AG04449 (cell line): ENCODE measurements at regions of chr9 and their contacts with region 1.

Region 1: GRCh38 chr9:21395778-21396717 is 10.8 kb upstream of the IFNA2 start:
- DNase-seq: no peak
- H3K4me3 ChIP-seq: peak overlapping the region; percentile 58
- CTCF ChIP-seq: peak; percentile 75

Region 2: DNA sequence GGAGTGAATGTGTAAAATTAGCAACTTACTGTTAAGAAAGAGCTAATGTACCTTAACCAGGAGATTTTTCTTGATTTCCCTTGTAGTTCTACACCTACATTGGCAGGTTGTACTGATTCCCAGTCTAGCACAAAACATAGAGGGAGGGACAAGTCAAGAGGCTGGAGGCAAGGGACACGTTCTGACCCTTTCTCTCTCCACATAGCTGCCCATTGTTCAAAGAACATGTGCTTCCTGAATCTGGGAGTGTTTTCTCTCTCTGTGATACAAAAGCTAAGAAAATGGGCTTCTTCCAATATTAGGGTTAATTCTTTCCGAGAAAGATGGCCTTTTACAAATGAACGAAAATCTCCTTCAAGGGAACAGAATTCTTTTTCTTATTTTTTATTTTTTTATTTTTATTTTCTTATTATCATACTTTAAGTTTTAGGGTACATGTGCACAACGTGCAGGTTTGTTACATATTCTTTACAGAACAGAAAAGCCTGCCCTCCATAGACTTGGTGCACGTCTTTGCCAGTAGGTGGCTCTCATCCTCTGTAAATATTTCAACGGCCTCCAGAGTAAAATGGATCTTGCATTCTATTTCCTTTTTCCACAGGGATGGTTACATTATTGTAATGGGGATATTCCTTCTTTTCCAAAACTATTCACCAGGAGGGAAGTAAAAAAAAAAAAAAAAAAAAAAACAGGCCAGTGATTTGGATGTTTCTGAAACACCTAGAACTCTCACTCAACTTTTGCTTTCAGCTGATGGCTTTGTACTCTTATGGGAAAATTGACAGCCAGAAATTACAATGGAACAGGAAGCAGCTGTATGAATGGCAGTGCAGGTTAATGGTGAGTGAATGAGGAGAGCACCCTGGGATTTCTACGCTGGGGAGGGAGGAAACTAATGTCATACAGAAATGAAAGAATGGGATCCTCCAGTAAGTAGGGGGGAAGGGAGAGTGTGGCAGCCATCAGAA is 77.8 kb before region 1 on chr9:
- CTCF ChIA-PET with region 1: interaction called, 13 read pairs
- POLR2A ChIA-PET with region 1: no interaction called
- DNase-seq: no peak
- H3K4me3 ChIP-seq: no peak overlapping the region
- CTCF ChIP-seq: peak; percentile 71

Region 3: GRCh38 chr9:21326526-21327139 is 69.4 kb before region 1 on chr9:
- CTCF ChIA-PET with region 1: interaction called, 17 read pairs
- POLR2A ChIA-PET with region 1: no interaction called
- DNase-seq: no peak
- H3K4me3 ChIP-seq: no peak overlapping the region
- CTCF ChIP-seq: peak; percentile 34

Region 4: DNA sequence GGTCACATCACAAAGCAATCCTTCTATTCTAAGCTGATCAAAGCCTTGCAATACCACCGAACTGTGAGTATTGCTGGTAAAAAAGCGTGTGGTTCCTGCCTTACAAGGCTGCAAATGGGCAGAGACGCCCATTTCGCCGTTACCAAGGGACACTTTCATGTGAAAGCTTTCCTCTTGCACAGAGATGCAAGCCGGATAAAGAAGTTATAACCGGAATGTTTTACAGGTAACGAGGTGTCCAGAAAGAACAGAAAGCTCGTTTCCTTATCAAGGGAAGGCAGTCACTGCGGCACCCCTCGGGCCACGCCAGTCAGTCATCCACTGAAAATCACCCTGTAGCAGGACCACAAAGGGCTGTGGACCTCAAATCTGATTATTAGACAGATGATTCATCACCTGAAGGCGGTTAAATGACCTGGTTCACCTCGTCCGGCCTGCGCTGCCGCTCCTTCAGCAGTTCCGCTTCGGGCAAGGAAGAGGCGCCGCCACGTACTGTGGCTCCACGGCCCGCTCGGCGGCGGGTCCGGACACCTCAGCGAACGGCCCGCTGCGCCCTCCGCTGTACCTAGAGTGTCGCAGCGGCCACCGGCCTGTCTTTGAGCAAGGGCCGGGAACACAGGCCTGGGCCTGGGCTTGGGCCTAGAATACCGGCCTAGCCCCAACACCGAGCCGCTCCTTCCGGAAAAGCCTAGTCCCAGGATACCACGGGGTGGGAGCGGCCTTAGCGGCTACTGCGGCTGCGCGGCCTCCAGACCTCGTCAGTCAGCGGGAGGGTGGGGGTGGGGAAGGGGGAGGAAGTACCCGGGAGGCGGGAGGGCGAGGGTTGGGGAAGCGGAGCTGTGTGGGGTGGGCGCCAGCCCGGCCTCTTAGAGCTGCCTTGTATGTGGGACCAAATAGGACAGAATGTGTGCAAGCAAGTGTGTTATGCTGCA is 61.1 kb before region 1 on chr9 and contains the start of gene KLHL9:
- CTCF ChIA-PET with region 1: interaction called, 17 read pairs
- POLR2A ChIA-PET with region 1: interaction called, 4 read pairs
- DNase-seq: peak; percentile 52
- H3K4me3 ChIP-seq: peak within 1 kb of the TSS; percentile 81
- CTCF ChIP-seq: no peak

Region 5: DNA sequence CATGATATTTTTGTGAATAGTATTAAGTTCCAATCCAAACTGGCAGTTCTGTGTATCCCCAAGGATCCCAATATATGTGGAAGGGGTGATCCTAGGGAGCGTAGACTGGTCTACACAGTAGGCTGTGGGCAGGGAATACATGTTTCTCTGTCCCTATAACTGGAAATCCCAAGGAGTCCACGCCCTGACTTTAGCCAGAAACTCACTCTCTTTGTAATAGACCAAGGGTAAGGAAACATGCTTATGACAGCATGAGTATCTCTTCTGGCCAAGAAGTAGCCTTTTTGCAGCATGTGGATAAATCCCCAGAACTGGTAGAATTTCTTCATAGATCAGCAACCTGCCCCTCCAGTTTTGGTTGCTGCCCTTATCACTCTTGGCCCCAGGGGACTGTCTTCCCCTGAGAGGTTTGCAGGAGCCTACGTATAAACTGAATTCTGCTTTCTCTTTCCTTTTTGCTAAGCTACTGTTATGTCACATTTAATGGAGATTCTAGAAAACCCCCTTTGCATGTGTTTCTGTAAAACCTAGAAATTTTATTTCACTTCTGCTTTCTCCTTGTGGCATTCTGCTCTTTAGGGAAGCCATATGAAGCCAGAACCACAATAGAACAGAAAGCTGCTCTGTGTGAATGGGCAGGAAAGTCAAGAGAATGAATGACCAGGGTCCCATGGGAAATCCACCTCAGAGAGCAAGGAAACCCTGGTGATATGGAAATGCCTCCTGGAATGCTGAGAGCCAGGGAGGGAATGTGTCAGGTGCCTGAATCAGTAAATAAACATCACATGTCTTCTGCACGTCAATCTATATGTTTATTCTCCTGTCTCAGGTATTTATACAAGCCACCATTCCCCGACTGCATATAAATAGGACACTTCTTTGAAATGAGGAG is 14.4 kb before region 1 on chr9:
- CTCF ChIA-PET with region 1: interaction called, 13 read pairs
- POLR2A ChIA-PET with region 1: no interaction called
- DNase-seq: no peak
- H3K4me3 ChIP-seq: no peak overlapping the region
- CTCF ChIP-seq: no peak

Region 6: DNA sequence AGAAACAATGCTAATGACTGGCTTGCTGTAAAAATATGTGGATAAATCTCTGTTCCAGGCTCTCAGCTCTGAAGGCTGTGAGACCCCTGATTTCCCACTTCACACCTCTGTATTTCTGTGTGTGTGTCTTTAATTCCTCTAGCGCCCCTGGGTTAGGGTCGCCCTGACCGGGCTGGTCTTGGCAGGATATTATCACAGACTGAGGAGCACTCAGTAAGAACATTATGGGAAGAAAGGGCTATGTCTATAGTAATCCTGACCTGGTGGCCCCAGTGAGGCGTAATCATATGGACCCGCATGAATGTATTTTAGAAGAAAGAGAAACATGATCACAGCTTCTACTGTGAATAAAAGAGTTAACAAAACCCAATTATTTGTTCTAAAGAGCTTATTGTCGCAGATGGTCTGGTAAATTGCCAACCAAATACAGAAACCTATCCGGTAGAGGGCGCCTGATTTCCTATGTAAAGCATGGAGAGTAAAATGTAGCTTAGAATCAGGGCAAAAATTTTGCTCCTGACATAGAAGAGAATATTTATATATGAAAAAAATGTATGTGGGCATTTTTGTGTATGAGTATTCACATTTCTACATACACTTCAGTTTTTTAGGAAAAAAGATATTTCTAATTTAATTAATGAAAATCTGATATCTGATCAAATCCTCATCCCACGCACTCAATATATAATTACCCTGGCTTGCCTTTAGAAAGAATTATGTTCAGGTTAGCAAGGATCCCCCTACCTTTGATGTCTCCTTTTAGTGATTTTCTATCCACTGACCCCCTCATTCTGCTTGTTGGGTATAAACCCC is 38.4 kb after region 1 on chr9:
- CTCF ChIA-PET with region 1: interaction called, 12 read pairs
- POLR2A ChIA-PET with region 1: no interaction called
- DNase-seq: peak; percentile 23
- H3K4me3 ChIP-seq: no peak overlapping the region
- CTCF ChIP-seq: peak; percentile 53

Region 7: DNA sequence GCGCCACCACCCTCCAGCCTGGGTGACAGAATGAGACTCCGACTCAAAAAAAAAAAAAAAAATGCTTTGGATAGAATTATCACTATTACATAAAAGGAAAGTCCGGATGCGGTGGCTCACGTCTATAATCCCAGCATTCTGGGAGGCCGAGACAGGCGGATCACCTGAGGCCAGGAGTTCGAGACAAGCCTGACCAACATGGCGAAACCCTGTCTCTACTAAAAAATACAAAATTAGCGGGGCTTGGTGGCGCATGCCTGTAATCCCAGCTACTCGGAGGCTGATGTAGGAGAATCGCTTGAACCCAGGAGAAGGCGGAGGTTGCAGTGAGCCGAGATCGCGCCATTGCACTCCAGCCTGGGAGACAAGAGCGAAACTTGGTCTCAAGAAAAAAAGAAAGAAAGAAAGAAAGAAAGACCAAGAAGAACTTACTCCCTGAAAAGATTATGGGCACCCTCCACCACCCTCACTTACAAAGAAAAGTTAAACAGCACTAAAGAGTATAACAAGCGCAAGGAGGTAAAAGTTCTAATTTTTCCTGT is 580.4 kb after region 1 on chr9:
- CTCF ChIA-PET with region 1: no interaction called
- POLR2A ChIA-PET with region 1: no interaction called
- DNase-seq: no peak
- H3K4me3 ChIP-seq: no peak overlapping the region
- CTCF ChIP-seq: no peak